ENCODE measurements at regions of chr7 and their contacts with region 1.

Region 1: DNA sequence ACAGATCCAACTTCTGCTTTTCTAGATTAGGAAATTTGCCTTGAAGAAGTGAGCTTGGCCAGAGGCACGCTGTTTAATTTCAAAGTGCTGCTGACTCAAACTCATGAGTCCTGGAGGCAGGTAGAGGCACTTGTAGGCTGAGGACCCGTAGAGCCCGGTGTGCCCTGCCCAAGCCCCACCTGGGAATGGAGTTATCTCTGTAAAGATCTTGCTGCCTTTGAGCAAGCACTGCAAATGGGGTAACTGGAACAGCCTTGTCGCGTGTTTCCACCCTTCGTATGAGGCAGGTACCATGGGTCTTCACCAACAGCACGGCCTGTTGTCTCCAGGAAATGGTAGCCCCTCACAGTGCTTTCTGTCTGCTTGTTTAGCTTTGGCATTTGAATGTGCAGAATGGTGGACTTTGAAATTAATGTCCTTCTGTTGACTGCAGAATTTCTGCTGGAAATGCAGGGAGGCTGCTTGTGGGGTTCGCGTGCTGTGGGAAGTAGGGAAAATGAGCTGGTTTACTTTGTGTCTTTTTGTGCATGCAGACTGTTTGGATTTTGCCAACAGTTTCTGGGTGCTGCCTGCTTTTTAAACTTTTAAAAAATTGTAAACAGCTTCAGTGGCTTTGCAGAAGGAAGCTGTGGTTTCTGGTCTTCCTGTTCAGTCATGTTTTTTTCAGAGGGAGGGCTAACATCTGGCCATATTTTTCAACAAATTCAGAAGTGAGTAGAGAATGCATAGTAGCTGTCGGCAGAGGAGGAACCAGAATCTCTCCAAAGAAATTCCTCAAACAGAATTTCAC is 27.2 kb downstream of the CCM2 start:
- DNase-seq: peak; percentile 84
- H3K4me3 Mint-ChIP-seq: peak overlapping the region; percentile 85
- H3K27ac Mint-ChIP-seq: peak overlapping the region; percentile 85
- H3K4me1 Mint-ChIP-seq: peaks cover 68% of the 10 kb centered on the region
- H3K27me3 Mint-ChIP-seq: no peaks in the 10 kb centered on the region

Region 2: DNA sequence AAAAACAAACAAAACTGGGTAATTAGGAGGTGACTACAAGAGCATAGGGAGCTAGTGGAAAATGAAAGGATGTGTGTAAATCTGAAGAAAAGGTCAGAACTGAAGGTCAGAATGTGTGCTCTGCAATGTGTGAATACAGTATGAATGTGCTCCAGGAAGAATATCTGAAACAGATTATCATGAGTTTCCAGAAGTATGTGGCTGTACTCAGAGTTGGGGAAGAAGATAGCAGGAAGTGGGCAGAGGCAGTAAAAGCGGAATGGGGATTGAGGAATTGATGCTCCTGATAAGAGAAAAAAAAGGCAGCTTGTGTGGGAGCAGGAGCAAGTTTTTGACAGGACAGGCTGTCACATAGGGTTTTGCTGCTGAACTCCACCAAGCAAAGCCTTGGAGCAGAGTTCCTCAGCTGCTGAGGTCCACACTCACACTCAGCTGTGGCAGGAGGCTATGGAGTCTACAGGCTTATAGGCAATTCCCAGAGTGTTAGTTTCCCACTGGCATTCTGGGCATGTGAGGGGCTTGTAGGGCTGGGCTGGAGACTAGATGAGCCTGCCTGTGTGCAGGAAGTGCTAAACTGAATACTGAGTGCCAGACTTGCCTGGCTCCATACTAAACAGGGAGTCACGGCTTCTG is 202.2 kb before region 1 on chr7:
- intact Hi-C with region 1: no loop called
- DNase-seq: no peak
- H3K4me3 Mint-ChIP-seq: no peak overlapping the region
- H3K27ac Mint-ChIP-seq: peak overlapping the region; percentile 63
- H3K4me1 Mint-ChIP-seq: peaks cover 15% of the 10 kb centered on the region
- H3K27me3 Mint-ChIP-seq: no peaks in the 10 kb centered on the region

Region 3: GRCh38 chr7:44980393-44981034 is 46.7 kb before region 1 on chr7:
- intact Hi-C with region 1: loop called (anchors 1 kb)
- DNase-seq: peak; percentile 89
- H3K4me3 Mint-ChIP-seq: peak overlapping the region; percentile 93
- H3K27ac Mint-ChIP-seq: peak overlapping the region; percentile 90
- H3K4me1 Mint-ChIP-seq: peaks cover 63% of the 10 kb centered on the region
- H3K27me3 Mint-ChIP-seq: no peaks in the 10 kb centered on the region

Region 4: DNA sequence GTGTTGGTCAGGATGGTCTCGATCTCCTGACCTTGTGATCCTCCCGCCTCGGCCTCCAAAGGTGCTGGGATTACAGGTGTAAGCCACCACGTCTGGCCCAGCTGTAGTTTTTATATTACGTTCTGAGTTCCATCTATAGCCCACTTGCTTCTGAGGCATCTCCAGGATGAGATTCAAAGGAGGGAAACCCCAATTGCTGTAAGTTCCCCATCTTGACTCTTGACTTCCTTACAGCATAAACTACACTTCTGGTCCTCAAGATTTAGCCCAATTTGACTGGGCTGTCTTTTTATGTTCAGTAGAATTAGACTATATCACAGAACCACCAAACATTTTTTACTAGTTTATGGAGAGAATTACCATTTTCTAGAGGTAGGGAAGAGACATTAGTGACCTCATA is 17.2 kb after region 1 on chr7:
- intact Hi-C with region 1: loop called (anchors 2 kb)
- DNase-seq: no peak
- H3K4me3 Mint-ChIP-seq: no peak overlapping the region
- H3K27ac Mint-ChIP-seq: no peak overlapping the region
- H3K4me1 Mint-ChIP-seq: peaks cover 23% of the 10 kb centered on the region
- H3K27me3 Mint-ChIP-seq: no peaks in the 10 kb centered on the region

Region 5: GRCh38 chr7:45196374-45196773 is 169.2 kb after region 1 on chr7:
- intact Hi-C with region 1: loop called (anchors 5 kb)
- DNase-seq: peak; percentile 72
- H3K4me3 Mint-ChIP-seq: peak overlapping the region; percentile 18
- H3K27ac Mint-ChIP-seq: peak overlapping the region; percentile 82
- H3K4me1 Mint-ChIP-seq: peaks cover 30% of the 10 kb centered on the region
- H3K27me3 Mint-ChIP-seq: peaks cover 19% of the 10 kb centered on the region

Region 6: GRCh38 chr7:46534664-46535588 is 1507.7 kb after region 1 on chr7:
- intact Hi-C with region 1: no loop called
- DNase-seq: peak; percentile 15
- H3K4me3 Mint-ChIP-seq: no peak overlapping the region
- H3K27ac Mint-ChIP-seq: no peak overlapping the region
- H3K4me1 Mint-ChIP-seq: no peaks in the 10 kb centered on the region
- H3K27me3 Mint-ChIP-seq: no peaks in the 10 kb centered on the region

Measured in activated CD4-positive, alpha-beta T cell treated with anti-CD3 and anti-CD28 coated beads, Interleukin-2, amount 10 ng/mL, durations not matched to agents 24 days and 14 days (primary cell).